PC-9 (cell line): ENCODE measurements at regions of chr14 and their contacts with region 1.

Region 1: GRCh38 chr14:66359500-66359899 is 126.7 kb upstream of the CCDC196 start:
- DNase-seq: peak; percentile 16 to 64
- H3K4me3 ChIP-seq: no peak overlapping the region
- H3K27ac ChIP-seq: no peak overlapping the region
- H3K4me1 ChIP-seq: no peaks in the 10 kb centered on the region
- H3K27me3 ChIP-seq: no peaks in the 10 kb centered on the region
- CTCF ChIP-seq: peak; percentile 92

Region 2: DNA sequence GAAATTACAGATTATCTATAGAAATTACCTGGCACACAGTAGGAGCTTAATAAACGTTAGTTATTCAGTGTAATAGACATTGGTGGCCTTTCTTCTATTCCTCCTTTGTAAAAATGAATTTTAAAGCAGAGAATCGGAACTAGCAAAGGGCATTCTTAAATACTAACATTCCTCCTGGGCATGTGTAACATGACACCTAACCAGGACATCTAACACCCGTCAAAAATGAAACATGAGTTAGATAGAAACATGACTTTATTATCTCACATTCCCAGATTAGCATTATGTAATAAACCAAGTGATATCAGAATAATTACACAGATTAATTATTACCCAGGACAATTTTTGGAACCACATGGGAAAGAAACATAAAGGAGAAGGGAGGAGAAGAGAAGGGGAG is 17.1 kb before region 1 on chr14:
- CTCF ChIA-PET with region 1: interaction called, 11 read pairs
- POLR2A ChIA-PET with region 1: no interaction called
- intact Hi-C with region 1: no loop called
- DNase-seq: no peak
- H3K4me3 ChIP-seq: no peak overlapping the region
- H3K27ac ChIP-seq: no peak overlapping the region
- H3K4me1 ChIP-seq: no peaks in the 10 kb centered on the region
- H3K27me3 ChIP-seq: no peaks in the 10 kb centered on the region
- CTCF ChIP-seq: no peak

Region 3: GRCh38 chr14:66403183-66403582 is 43.7 kb after region 1 on chr14:
- CTCF ChIA-PET with region 1: interaction called, 25 read pairs
- POLR2A ChIA-PET with region 1: interaction called, 7 read pairs
- intact Hi-C with region 1: loop called (anchors 2 kb)
- DNase-seq: peak in 1 of 2 experiments; percentile 62
- H3K4me3 ChIP-seq: no peak overlapping the region
- H3K27ac ChIP-seq: no peak overlapping the region
- H3K4me1 ChIP-seq: no peaks in the 10 kb centered on the region
- H3K27me3 ChIP-seq: no peaks in the 10 kb centered on the region
- CTCF ChIP-seq: peak; percentile 65

Region 4: DNA sequence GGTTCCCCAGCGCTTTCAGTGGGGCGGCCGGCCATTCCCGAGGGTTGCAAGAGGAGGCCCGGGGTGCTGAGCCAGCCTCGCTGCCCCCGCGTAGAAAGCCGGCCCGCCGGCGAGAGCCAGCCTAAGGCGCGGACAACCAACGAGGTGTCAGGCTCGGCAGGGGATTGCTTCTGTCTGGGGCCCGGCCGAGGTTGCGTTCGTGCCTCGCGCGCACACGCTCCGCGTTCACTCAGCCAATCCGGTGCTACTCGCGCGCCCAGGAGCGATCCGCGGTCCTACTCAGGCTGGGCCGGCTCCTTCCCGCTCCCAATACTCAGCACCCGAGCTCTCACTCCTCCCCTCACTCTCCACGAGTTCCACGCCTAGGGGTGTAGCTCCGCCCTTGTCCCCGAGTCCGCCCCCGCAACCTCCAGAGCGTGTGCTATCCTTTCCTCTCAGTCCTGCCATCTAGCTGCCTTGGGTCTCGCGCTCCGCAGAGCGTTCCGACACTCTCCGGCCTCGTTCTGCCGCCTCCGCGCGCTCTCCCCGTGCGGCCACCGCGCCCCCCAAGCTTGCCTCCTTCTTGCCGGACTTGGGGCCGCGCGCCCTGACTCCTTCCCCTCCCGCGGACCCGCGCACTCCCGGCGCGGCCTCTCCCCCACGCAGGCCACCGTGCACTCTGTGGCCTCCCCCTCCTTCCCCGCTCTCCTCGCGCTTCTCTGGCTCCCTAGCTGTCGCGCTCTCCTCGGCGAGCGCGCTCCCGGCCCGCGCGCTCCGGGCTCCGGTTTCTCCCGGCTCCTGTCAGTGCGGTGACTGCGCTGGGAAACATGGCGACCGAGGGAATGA is 148.4 kb after region 1 on chr14 and contains the start of gene GPHN:
- CTCF ChIA-PET with region 1: interaction called, 19 read pairs
- POLR2A ChIA-PET with region 1: interaction called, 10 read pairs
- intact Hi-C with region 1: no loop called
- DNase-seq: peak; percentile 94 to 98
- H3K4me3 ChIP-seq: peak within 1 kb of the TSS; percentile 76
- H3K27ac ChIP-seq: peak within 1 kb of the TSS; percentile 79
- H3K4me1 ChIP-seq: peaks cover 33% of the 10 kb centered on the region
- H3K27me3 ChIP-seq: no peaks in the 10 kb centered on the region
- CTCF ChIP-seq: peak; percentile 26; the same call in 1 of the 2 replicates
- total RNA-seq, gene GPHN: 18.3 and 20.5 TPM in 2 replicates

Region 5: DNA sequence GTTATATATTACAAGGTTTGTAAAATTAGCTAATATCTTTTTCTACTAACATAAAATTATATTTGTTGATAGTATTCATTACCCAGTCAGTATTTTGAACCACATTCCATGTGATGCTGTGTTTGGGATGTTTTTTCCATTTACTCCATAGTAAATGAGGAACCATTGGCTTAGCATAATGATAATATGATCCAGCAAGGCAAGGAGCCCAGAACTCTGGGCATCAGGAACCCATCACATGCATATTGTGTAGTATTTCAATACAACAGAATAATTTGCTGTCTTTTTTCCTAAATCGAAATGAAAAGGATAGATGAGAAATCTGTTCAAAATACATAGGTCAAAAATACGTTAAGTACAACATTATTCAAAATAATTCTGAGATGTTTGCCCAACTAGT is 781.1 kb after region 1 on chr14:
- CTCF ChIA-PET with region 1: no interaction called
- POLR2A ChIA-PET with region 1: no interaction called
- intact Hi-C with region 1: loop called (anchors 10 kb)
- DNase-seq: no peak
- H3K4me3 ChIP-seq: no peak overlapping the region
- H3K27ac ChIP-seq: no peak overlapping the region
- H3K4me1 ChIP-seq: no peaks in the 10 kb centered on the region
- H3K27me3 ChIP-seq: no peaks in the 10 kb centered on the region
- CTCF ChIP-seq: no peak

Region 6: DNA sequence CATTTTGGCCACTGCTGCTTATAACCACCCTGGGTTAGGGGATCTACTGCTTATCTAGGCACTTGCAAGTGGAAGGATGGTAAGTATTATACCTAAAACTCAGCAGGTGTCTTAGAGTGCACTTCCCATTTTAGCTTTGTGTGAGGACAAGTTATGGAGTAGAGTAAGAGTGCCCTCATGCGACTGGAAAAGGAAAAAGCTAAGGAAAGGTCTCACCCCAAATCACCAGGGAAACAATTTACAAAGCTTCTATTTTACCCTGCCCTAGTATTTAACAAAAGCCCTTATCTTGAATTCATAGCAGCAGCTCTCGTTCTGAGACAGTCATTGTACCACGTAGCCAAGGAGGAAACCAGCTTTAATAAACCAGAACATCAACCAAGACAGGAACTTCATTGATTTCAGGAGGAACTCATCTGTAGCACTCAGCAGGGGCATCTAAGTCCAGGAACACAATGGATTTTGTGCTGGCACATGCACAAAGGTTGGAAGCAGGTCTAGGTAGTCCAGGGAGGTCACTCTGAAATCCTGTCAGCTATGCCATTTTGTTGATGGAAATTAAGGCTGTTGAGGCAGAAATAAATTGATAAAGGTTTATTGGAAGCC is 1345.1 kb after region 1 on chr14:
- CTCF ChIA-PET with region 1: interaction called, 11 read pairs
- POLR2A ChIA-PET with region 1: no interaction called
- intact Hi-C with region 1: no loop called
- DNase-seq: peak; percentile 51 to 66
- H3K4me3 ChIP-seq: no peak overlapping the region
- H3K27ac ChIP-seq: no peak overlapping the region
- H3K4me1 ChIP-seq: peaks cover 24% of the 10 kb centered on the region
- H3K27me3 ChIP-seq: no peaks in the 10 kb centered on the region
- CTCF ChIP-seq: peak; percentile 82